Endothelial cell of umbilical vein (primary cell): ENCODE measurements at regions of chr1 and their contacts with region 1.

Region 1: DNA sequence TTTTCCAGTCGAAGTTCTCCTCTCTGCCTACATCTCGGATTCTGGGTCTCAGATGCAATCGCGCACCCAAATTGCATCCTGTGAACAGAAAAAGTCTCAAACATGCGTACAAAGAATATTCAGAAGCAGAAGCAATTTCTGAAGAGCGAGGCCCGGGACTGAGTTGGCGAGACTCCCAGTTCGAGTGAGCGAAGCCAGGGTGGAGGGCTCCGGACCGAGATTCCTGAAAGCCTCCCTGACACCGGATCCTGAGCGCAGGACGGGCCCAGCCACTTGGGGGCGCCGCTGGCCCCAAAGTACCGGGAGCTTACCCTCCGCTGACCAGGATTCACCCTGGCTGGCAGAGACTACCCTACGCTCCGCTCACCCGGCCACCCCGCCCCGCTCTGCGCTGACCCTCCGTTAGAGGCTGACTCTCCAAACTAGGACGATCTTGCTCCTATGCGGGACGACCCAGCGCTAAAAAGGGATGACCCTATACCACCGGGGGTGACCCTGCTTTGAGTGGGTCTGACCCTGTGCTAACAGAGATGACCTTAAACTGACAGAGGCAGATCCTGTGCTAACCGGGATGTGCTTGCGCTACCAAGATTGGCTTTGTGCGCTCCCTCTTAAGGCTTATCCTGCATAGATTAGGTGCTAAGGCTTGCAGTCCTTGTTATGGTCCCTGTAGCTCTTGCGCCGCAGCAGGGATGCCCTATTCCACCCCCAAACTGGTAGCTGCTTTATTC is 12.1 kb downstream of the FOXD2 start:
- DNase-seq: no peak
- H3K4me3 ChIP-seq: no peak overlapping the region
- H3K27ac ChIP-seq: no peak overlapping the region
- H3K4me1 ChIP-seq: no peaks in the 10 kb centered on the region
- H3K27me3 ChIP-seq: peaks cover 62 to 66% of the 10 kb centered on the region in 2 experiments
- CTCF ChIP-seq: peak; percentile 41 to 69
- POLR2A ChIP-seq: no peak

Region 2: GRCh38 chr1:47696740-47697441 is 246.9 kb after region 1 on chr1:
- CTCF ChIA-PET with region 1: no interaction called
- POLR2A ChIA-PET with region 1: no interaction called
- dilution Hi-C with region 1: loop called (anchors 25 kb)
- intact Hi-C with region 1: no loop called
- DNase-seq: peak; percentile 10
- H3K4me3 ChIP-seq: no peak overlapping the region
- H3K27ac ChIP-seq: no peak overlapping the region
- H3K4me1 ChIP-seq: no peaks in the 10 kb centered on the region
- H3K27me3 ChIP-seq: no peaks in the 10 kb centered on the region
- CTCF ChIP-seq: no peak
- POLR2A ChIP-seq: no peak